ENCODE measurements at regions of chr1 and their contacts with region 1.

Region 1: GRCh38 chr1:152459596-152460528 is 45.8 kb upstream of the CRNN start:
- DNase-seq: peak; percentile 47
- H3K4me3 ChIP-seq: peak overlapping the region; percentile 24 to 39; a peak in 3 of 4 replicates
- H3K27ac ChIP-seq: no peak overlapping the region
- H3K4me1 ChIP-seq: peaks cover 0 to 2% of the 10 kb centered on the region in 2 experiments; a peak in 1 of 4 replicates
- H3K27me3 ChIP-seq: peaks cover 4% of the 10 kb centered on the region; the same call in 1 of the 2 replicates
- CTCF ChIP-seq: peak; percentile 90
- EP300 ChIP-seq: no peak
- RAD21 ChIP-seq: 0 out of 2 replicates have a peak, but pooled peaks have one; percentile 15

Region 2: DNA sequence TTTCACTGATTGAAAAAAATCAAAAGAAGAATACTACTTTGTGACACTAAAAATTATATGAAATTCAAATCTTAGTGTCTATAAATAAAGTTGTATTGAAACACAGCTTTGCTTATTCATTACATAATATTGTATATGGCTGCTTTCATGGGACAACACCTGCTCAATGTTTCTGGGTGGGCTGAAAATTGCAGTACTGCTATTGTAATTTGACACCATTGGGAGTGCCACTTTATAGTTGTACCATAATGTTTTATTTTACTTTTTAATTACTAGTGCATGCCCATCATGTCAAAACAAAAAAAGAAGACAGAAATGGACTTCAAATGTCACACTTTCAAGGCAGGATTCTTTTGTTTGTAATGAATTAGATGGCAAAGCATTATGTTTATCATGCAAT is 284.3 kb before region 1 on chr1:
- CTCF ChIA-PET with region 1: no interaction called
- POLR2A ChIA-PET with region 1: no interaction called
- DNase-seq: no peak
- H3K4me3 ChIP-seq: no peak overlapping the region
- H3K27ac ChIP-seq: no peak overlapping the region
- H3K4me1 ChIP-seq: no peaks in the 10 kb centered on the region
- H3K27me3 ChIP-seq: no peaks in the 10 kb centered on the region
- CTCF ChIP-seq: no peak
- EP300 ChIP-seq: no peak
- RAD21 ChIP-seq: no peak

Region 3: GRCh38 chr1:152189657-152190442 is 270.0 kb before region 1 on chr1:
- CTCF ChIA-PET with region 1: interaction called, 17 read pairs
- POLR2A ChIA-PET with region 1: no interaction called
- DNase-seq: peak; percentile 52
- H3K4me3 ChIP-seq: peak overlapping the region; percentile 8 to 45; a peak in 2 of 4 replicates
- H3K27ac ChIP-seq: no peak overlapping the region
- H3K4me1 ChIP-seq: no peaks in the 10 kb centered on the region; a peak in 1 of 4 replicates
- H3K27me3 ChIP-seq: 0 out of 2 replicates have a peak, but pooled peaks cover 5% of the 10 kb centered on the region
- CTCF ChIP-seq: peak; percentile 80
- EP300 ChIP-seq: no peak
- RAD21 ChIP-seq: peak; percentile 60

Region 4: GRCh38 chr1:152398812-152399698 is 60.8 kb before region 1 on chr1:
- CTCF ChIA-PET with region 1: interaction called, 18 read pairs
- POLR2A ChIA-PET with region 1: no interaction called
- DNase-seq: no peak
- H3K4me3 ChIP-seq: no peak overlapping the region
- H3K27ac ChIP-seq: no peak overlapping the region
- H3K4me1 ChIP-seq: no peaks in the 10 kb centered on the region
- H3K27me3 ChIP-seq: no peaks in the 10 kb centered on the region; the same call in 1 of the 2 replicates
- CTCF ChIP-seq: peak; percentile 54
- EP300 ChIP-seq: no peak
- RAD21 ChIP-seq: no peak

Region 5: DNA sequence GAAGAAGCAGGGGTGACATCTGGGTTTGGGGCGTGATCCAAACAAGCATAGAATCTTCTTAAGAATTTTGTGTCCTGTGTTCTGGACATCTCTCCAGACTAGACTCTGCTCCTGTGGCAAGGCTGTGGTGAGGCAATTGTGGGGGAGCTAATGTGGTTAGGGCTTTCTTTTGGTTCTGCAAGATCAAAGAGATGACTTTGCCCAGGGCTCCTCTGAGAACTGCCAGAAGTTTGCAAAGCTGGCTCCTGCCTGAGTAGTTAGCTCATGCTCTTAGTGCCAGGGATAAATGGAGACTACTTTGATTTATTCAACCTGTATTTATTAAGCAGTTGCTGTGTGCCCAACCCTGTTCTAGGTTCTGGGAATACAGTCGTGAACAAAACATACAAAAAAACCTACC is 11.8 kb before region 1 on chr1:
- CTCF ChIA-PET with region 1: interaction called, 20 read pairs
- POLR2A ChIA-PET with region 1: no interaction called
- DNase-seq: no peak
- H3K4me3 ChIP-seq: no peak overlapping the region
- H3K27ac ChIP-seq: no peak overlapping the region
- H3K4me1 ChIP-seq: no peaks in the 10 kb centered on the region
- H3K27me3 ChIP-seq: peaks cover 50% of the 10 kb centered on the region
- CTCF ChIP-seq: no peak
- EP300 ChIP-seq: no peak
- RAD21 ChIP-seq: no peak